MCF 10A (cell line): ENCODE measurements at regions of chr1 and their contacts with region 1.

Region 1: DNA sequence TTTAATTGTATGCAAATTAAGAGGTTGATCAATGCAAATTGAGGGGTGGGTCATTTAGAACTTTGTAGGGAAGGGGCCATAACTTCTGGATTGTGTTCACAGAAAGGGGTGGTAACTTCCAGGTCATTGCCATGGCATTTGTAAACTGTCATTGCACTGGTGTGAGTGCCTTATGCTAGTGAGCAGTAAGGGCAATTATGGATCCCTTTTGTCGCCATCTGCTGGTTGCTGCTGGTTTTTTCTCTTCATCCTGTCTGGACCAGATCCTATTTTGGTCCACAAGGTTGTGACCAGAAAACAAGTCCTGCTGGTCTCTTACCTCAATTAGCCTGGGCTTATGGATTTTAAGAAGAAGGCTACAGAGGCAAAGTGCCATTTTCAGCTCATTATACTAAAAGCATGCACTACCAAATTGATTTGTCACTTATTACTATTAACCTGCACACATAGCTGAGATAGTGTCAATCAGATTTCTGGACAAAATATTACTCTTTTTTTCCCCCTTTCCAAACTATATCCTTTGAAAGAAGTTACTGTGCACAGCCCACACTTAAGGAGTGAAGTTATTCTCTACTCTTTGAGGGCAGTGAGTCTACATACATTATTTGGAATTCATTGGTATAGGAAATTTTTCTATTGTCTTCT is 196.2 kb downstream of the ZC3H11B start:
- DNase-seq: peak; percentile 85
- H3K4me3 Mint-ChIP-seq: no peak overlapping the region
- H3K27ac Mint-ChIP-seq: no peak overlapping the region
- H3K4me1 Mint-ChIP-seq: no peaks in the 10 kb centered on the region
- H3K27me3 Mint-ChIP-seq: peaks cover 83% of the 10 kb centered on the region
- CTCF ChIP-seq: peak; percentile 92

Region 2: GRCh38 chr1:218259800-218260199 is 1156.9 kb before region 1 on chr1:
- CTCF ChIA-PET with region 1: no interaction called
- POLR2A ChIA-PET with region 1: no interaction called
- intact Hi-C with region 1: loop called (anchors 10 kb)
- DNase-seq: peak; percentile 68
- H3K4me3 Mint-ChIP-seq: no peak overlapping the region
- H3K27ac Mint-ChIP-seq: no peak overlapping the region
- H3K4me1 Mint-ChIP-seq: no peaks in the 10 kb centered on the region
- H3K27me3 Mint-ChIP-seq: peaks cover 84% of the 10 kb centered on the region
- CTCF ChIP-seq: peak; percentile 68

Region 3: DNA sequence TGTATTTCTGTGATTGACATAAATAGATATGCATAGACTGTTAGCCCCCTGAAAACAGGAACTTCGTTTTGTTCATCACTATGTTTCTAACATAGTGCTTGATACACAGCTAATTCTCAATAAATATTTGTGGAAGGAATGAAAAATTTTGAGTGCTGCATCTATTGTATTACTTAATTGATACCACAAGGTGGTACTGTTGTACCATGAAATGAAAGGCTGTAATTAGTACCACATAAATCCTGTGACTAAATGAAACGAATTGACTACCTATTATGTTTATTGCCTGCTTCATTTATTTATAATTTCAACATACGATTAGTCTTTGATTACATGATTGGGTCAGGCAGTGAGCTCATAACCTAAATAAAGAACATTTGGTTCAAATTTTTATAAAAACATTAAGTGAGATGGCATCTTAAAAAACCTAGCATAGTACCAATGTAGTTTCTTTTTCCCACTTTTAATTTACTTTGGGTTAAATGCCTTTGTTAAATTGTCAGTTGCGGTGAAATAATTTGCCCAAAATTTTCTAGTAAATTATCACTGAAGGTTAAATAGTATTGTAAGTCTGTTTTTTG is 1086.6 kb before region 1 on chr1:
- CTCF ChIA-PET with region 1: interaction called, 6 read pairs
- POLR2A ChIA-PET with region 1: no interaction called
- intact Hi-C with region 1: loop called (anchors 1 kb)
- DNase-seq: peak; percentile 67
- H3K4me3 Mint-ChIP-seq: no peak overlapping the region
- H3K27ac Mint-ChIP-seq: peak overlapping the region; percentile 55
- H3K4me1 Mint-ChIP-seq: no peaks in the 10 kb centered on the region
- H3K27me3 Mint-ChIP-seq: no peaks in the 10 kb centered on the region
- CTCF ChIP-seq: peak; percentile 84

Region 4: DNA sequence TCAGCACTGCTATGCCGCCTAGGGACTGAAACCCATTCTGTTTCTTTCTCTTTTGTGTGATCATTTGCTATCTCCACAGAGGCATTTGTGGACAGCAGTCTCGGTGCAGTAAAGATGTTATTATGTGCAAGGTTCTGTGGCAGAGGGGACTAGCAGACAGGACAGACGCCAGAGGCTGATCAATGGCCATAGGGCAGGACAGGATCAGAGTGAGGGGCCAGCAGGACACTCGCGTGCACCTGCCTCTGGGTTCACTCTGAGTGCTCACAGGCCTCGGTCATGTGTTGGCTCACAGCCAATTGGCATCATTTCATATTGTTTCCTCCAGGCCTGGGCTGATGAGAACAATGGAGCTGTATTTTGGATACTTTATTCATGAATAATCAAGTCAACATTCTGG is 859.0 kb before region 1 on chr1:
- CTCF ChIA-PET with region 1: no interaction called
- POLR2A ChIA-PET with region 1: no interaction called
- intact Hi-C with region 1: no loop called
- DNase-seq: peak; percentile 87
- H3K4me3 Mint-ChIP-seq: no peak overlapping the region
- H3K27ac Mint-ChIP-seq: no peak overlapping the region
- H3K4me1 Mint-ChIP-seq: no peaks in the 10 kb centered on the region
- H3K27me3 Mint-ChIP-seq: no peaks in the 10 kb centered on the region
- CTCF ChIP-seq: no peak

Region 5: GRCh38 chr1:219209578-219209977 is 207.1 kb before region 1 on chr1:
- CTCF ChIA-PET with region 1: interaction called, 3 read pairs
- POLR2A ChIA-PET with region 1: no interaction called
- intact Hi-C with region 1: loop called (anchors 1 kb)
- DNase-seq: no peak
- H3K4me3 Mint-ChIP-seq: no peak overlapping the region
- H3K27ac Mint-ChIP-seq: no peak overlapping the region
- H3K4me1 Mint-ChIP-seq: no peaks in the 10 kb centered on the region
- H3K27me3 Mint-ChIP-seq: no peaks in the 10 kb centered on the region
- CTCF ChIP-seq: no peak

Region 6: GRCh38 chr1:219304227-219305226 is 112.2 kb before region 1 on chr1:
- CTCF ChIA-PET with region 1: interaction called, 3 read pairs
- POLR2A ChIA-PET with region 1: no interaction called
- intact Hi-C with region 1: loop called (anchors 1 kb)
- DNase-seq: peak; percentile 79
- H3K4me3 Mint-ChIP-seq: no peak overlapping the region
- H3K27ac Mint-ChIP-seq: no peak overlapping the region
- H3K4me1 Mint-ChIP-seq: peaks cover 11% of the 10 kb centered on the region
- H3K27me3 Mint-ChIP-seq: peaks cover 84% of the 10 kb centered on the region
- CTCF ChIP-seq: peak; percentile 49

Region 7: GRCh38 chr1:219329578-219329977 is 87.1 kb before region 1 on chr1:
- CTCF ChIA-PET with region 1: no interaction called
- POLR2A ChIA-PET with region 1: no interaction called
- intact Hi-C with region 1: no loop called
- DNase-seq: no peak
- H3K4me3 Mint-ChIP-seq: no peak overlapping the region
- H3K27ac Mint-ChIP-seq: no peak overlapping the region
- H3K4me1 Mint-ChIP-seq: peaks cover 12% of the 10 kb centered on the region
- H3K27me3 Mint-ChIP-seq: peaks cover 100% of the 10 kb centered on the region
- CTCF ChIP-seq: no peak

Region 8: GRCh38 chr1:219427403-219427802 is 10.7 kb after region 1 on chr1:
- CTCF ChIA-PET with region 1: interaction called, 63 read pairs
- POLR2A ChIA-PET with region 1: no interaction called
- intact Hi-C with region 1: no loop called
- DNase-seq: no peak
- H3K4me3 Mint-ChIP-seq: no peak overlapping the region
- H3K27ac Mint-ChIP-seq: no peak overlapping the region
- H3K4me1 Mint-ChIP-seq: no peaks in the 10 kb centered on the region
- H3K27me3 Mint-ChIP-seq: peaks cover 51% of the 10 kb centered on the region
- CTCF ChIP-seq: no peak

Region 9: DNA sequence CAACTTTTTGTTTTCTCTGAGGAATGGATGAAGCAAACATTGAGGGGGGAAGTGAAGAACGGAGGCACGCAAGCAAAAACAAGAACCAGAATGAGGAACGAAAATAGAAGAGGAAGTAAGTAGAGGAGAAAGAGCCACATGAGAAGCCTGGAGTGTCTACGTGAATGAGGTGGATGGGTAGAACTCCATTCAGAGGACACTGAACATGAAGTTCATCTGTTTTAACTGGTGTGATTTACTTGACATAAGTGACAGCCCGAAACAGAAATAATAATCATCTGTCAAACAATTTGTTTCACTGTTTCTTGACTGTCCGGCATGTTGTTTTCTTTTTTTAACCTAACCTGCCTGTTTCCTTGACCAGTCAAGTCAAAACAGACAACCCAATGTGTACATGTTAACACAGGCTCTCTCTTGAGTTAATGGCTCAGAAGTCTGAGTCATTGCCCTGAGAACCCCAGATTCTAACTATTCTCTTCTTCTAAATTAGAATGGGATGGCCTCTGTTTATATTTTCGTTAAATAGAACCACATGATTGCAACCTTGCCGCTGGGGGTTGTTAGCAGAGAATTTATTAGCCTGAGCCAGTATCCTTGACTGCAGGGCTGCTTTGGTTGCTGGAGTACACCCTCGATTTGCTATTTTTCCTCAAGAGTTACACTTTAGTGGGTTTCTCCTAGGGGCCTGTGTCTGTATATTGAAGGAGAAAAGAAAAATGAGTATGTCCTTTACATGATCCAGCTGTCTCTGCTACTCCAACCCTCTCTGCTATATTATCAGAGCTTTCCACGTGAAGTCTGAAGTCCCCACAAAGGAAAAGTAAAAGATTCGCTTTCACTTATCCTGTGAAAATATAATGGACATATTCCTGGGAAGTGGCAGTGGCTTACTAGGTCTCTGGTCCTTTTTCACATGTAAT is 44.4 kb after region 1 on chr1:
- CTCF ChIA-PET with region 1: no interaction called
- POLR2A ChIA-PET with region 1: no interaction called
- intact Hi-C with region 1: no loop called
- DNase-seq: peak; percentile 60
- H3K4me3 Mint-ChIP-seq: no peak overlapping the region
- H3K27ac Mint-ChIP-seq: no peak overlapping the region
- H3K4me1 Mint-ChIP-seq: no peaks in the 10 kb centered on the region
- H3K27me3 Mint-ChIP-seq: peaks cover 61% of the 10 kb centered on the region
- CTCF ChIP-seq: no peak